Lower leg skin (tissue), 4 donors: ENCODE measurements at regions of chr15 and their contacts with region 1.

Region 1: DNA sequence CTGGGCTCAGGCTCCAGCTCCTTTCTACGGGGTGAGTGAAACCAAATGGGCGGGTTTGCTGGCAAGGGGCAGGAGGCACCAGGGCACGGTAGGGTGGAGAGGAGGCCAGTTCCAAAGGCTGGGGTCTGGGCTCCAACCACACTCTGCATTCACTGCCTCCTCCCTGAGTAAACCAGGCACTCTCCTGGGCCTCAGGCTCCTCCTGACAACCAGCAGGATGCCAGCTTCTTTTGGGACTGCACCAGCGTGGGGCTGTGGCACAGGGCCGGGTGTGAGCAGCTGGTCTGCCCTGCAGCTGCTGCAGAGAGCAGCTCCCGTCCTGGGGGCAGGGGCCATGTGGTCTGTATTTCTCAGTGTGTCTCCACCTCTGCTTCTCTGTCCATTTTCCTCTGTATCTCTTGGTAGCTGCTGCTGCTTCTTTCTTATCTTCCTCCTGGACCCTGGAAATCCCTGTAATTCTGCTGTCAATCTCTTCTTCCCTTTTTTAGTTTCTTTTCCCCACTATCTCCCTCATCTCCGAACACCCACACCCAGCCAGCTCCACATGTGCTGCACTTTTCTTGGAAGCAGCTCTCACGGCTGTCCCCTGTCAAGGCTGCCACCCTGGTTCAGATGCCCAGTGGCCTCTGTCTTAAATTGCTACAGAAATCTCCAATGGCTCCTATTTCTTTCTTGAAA is 54.9 kb upstream of the TBC1D21 start:
- DNase-seq: no peak
- H3K4me3 ChIP-seq: no peak overlapping the region
- CTCF ChIP-seq: no peak
- POLR2A ChIP-seq: no peak

Region 2: GRCh38 chr15:73806698-73807483 is 11.6 kb before region 1 on chr15:
- intact Hi-C with region 1: loop called (anchors 1 kb)
- DNase-seq: no peak
- H3K4me3 ChIP-seq: no peak overlapping the region
- CTCF ChIP-seq: no peak
- POLR2A ChIP-seq: no peak

Region 3: GRCh38 chr15:73927476-73928240 is 109.2 kb after region 1 on chr15:
- intact Hi-C with region 1: no loop called
- DNase-seq: peak in 1 of 2 donors; percentile 92
- H3K4me3 ChIP-seq: peak overlapping the region; percentile 46
- CTCF ChIP-seq: no peak
- POLR2A ChIP-seq: no peak

Region 4: GRCh38 chr15:73991726-73992593 is 173.5 kb after region 1 on chr15 and contains the start of gene STOML1:
- intact Hi-C with region 1: no loop called
- DNase-seq: peak; percentile 84 to 98
- H3K4me3 ChIP-seq: peak within 1 kb of the TSS; percentile 44
- CTCF ChIP-seq: peak in 1 of 3 donors; percentile 25
- POLR2A ChIP-seq: no peak
- total RNA-seq, gene STOML1: 14.4 to 24.6 (median 23.9) TPM